ENCODE measurements at regions of chr12 and their contacts with region 1.

Region 1: DNA sequence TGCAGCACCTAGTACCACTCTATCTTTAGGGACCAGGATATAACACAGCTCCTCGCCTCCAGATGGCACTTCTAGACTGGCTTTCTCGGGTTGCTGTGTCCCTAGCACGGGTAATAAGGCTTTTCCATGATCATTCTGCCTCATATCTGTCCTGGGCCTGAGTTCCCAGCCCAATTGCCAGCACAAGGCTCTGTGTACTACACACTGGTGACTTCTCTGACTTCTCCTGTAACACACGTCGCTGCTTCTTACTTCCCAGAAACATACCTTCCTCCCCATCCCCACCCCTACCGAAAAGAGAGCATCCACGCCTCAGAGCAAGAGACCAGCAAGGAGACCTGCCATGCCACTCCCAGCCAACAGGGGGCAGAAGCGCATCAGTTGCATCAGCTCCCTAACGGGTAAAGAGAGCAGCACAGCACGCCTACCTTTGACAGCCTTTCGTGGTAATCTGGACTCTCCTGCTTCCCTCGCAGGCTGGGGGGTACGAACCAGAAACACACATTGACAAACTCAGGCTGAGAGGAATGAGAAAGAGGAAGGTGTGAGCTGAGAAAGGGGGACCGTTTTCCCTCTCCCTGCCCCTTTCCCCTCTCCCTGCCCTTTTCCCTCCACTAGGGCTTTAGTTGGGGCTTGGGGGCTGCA is 21.2 kb upstream of the ZNF740 start:
- DNase-seq: peak; percentile 42
- H3K4me3 ChIP-seq: no peak overlapping the region
- H3K27ac ChIP-seq: no peak overlapping the region
- H3K27me3 ChIP-seq: no peaks in the 10 kb centered on the region
- CTCF ChIP-seq: peak; percentile 99

Region 2: DNA sequence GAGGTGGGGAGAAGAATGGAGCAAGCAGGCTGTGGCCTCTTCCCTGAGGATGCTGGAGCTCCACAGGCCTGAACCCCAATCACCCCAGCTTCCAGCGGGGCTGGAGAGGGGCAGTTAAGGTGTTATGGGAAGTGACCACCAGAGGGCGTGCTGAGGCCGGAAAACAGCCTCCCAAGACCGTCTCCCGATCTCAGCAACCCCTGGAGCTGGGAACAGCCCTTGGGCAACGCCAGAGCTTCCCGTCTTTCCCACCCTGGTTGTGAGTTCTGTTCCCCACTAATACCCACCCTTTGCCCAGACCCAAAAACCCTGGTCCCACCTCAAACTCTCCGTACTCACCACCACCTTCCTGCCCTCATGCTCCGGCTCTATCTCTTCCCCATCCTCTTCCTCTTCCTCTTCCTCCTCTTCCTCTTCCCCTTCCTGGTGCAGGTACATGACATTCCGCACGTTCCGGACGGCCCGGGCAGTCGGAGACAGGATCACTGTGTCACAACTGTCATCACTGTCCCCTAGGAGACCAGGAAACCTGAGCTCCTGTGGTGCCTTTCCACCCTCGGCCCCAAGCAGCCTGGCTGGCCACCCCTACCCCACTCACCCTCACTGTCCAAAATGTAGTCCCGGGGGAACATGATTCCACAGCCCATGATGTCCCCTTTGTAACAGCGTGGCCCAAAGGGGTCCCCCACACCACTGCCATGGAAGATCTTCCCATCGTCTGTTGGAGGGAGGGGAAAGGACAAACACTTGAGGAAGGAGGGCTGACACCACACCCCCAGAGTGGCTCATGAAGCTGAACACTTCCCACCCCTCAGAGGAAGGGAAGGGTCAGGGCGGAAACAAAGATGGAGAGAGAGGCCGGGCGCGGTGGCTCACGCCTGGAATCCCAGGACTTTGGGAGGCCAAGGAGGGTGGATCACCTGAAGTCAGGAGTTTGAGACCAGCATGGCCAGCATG is 93.1 kb before region 1 on chr12:
- CTCF ChIA-PET with region 1: interaction called, 21 read pairs
- POLR2A ChIA-PET with region 1: interaction called, 5 read pairs
- DNase-seq: no peak
- H3K4me3 ChIP-seq: no peak overlapping the region
- H3K27ac ChIP-seq: peak overlapping the region; percentile 39
- H3K27me3 ChIP-seq: no peaks in the 10 kb centered on the region
- CTCF ChIP-seq: peak; percentile 88

Region 3: DNA sequence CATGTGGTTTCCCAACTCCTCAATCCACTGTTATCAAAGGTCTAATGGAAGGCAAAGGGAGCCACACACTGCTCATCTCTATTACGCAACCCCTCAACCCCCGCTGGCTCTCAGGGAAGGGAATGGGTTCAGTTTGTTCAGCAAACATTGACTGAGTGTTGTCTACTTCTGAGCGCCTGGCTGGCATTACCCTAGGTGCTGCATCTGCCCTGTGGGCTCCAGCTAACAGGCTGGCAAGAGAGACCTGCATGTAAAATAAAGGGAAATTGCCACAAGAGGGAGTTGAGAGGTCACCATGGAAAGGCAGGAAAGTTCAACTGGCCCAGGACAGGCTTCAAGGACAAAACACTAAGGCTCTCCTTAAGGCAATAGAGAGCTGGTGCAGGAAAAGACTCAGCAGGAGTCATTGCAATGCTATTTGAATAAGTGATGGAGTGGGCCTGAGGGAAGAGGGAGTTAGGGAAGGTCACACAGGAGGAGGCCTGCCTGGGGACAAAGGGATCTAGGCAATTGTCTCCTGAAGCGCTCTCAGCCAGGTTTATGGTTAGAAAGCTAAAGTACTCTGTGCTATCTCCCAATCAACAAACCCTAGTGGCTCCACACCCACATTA is 15.7 kb after region 1 on chr12:
- CTCF ChIA-PET with region 1: interaction called, 47 read pairs
- POLR2A ChIA-PET with region 1: interaction called, 6 read pairs
- DNase-seq: no peak
- H3K4me3 ChIP-seq: no peak overlapping the region
- H3K27ac ChIP-seq: no peak overlapping the region
- H3K27me3 ChIP-seq: no peaks in the 10 kb centered on the region
- CTCF ChIP-seq: peak; percentile 35; the same call in 1 of the 2 replicates

Region 4: DNA sequence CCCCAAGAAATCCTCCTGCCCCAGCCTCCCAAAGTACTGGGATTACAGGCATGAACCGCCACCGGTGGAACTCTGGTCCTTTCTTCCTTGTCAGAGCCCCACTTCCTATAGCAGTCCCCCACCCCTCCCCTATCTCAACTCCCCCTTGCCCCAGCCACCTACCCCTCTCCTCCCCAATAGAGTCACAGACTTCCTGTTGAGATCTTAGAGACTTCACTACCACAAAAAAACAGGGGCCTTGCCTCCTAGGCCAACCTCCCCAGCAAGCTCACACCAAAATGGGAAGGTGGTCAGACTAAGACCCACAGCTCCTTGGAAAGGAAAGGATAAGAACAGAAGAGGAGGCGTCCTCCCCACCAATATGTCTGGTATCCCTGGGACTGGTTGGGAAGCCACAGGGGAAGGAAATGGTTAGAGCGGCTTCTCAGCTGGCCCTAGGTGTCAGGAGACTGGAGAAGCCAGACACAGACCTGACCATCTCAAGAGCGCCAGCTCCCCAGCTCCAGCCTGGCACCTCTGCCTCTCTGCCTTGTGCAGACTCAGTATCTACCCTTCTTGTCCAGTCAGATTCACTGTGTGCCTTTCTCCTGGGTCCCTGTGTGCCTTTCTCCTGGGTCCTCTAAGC is 39.3 kb after region 1 on chr12:
- CTCF ChIA-PET with region 1: interaction called, 34 read pairs
- POLR2A ChIA-PET with region 1: interaction called, 4 read pairs
- DNase-seq: no peak
- H3K4me3 ChIP-seq: no peak overlapping the region
- H3K27ac ChIP-seq: no peak overlapping the region
- H3K27me3 ChIP-seq: no peaks in the 10 kb centered on the region
- CTCF ChIP-seq: no peak

Region 5: GRCh38 chr12:53344824-53345485 is 185.6 kb after region 1 on chr12:
- CTCF ChIA-PET with region 1: interaction called, 10 read pairs
- POLR2A ChIA-PET with region 1: interaction called, 4 read pairs
- DNase-seq: peak; percentile 33
- H3K4me3 ChIP-seq: peak overlapping the region; percentile 76
- H3K27ac ChIP-seq: peak overlapping the region; percentile 11
- H3K27me3 ChIP-seq: peaks cover 8% of the 10 kb centered on the region
- CTCF ChIP-seq: peak; percentile 88

Measured in AG04450 (cell line).